Calu3 (cell line): ENCODE measurements at regions of chr3 and their contacts with region 1.

Region 1: GRCh38 chr3:110343945-110344344 is 727.7 kb upstream of the NECTIN3 start:
- DNase-seq: peak; percentile 3
- H3K4me3 Mint-ChIP-seq: peak overlapping the region; percentile 14
- H3K27ac Mint-ChIP-seq: peak overlapping the region; percentile 91
- H3K4me1 Mint-ChIP-seq: peaks cover 49% of the 10 kb centered on the region
- H3K27me3 Mint-ChIP-seq: no peaks in the 10 kb centered on the region
- CTCF ChIP-seq: no peak

Region 2: DNA sequence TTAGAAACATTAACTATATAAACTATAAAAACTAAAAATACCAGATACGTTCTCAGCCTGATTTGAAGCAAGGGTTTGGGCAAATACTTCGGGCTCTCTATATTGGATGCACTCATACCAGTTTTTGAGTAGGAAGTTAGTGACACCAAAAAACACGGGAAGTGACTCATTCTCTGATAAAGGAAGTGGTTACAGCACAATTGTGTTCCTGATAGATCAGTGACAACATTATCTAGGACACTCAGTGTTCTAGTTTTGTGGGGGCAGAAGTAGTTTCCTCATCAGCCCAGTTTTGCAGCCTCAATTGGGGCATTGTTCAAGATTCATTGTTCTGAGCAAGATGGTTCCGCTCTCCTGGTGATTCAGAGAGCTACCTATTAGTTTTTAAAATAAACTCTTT is 537.0 kb before region 1 on chr3:
- CTCF ChIA-PET with region 1: no interaction called
- intact Hi-C with region 1: loop called (anchors 5 kb)
- DNase-seq: peak; percentile 48
- H3K4me3 Mint-ChIP-seq: no peak overlapping the region
- H3K27ac Mint-ChIP-seq: peak overlapping the region; percentile 94
- H3K4me1 Mint-ChIP-seq: peaks cover 33% of the 10 kb centered on the region
- H3K27me3 Mint-ChIP-seq: no peaks in the 10 kb centered on the region
- CTCF ChIP-seq: no peak

Region 3: GRCh38 chr3:110391640-110392395 is 47.9 kb after region 1 on chr3:
- CTCF ChIA-PET with region 1: no interaction called
- intact Hi-C with region 1: no loop called
- DNase-seq: no peak
- H3K4me3 Mint-ChIP-seq: no peak overlapping the region
- H3K27ac Mint-ChIP-seq: no peak overlapping the region
- H3K4me1 Mint-ChIP-seq: no peaks in the 10 kb centered on the region
- H3K27me3 Mint-ChIP-seq: no peaks in the 10 kb centered on the region
- CTCF ChIP-seq: no peak

Region 4: DNA sequence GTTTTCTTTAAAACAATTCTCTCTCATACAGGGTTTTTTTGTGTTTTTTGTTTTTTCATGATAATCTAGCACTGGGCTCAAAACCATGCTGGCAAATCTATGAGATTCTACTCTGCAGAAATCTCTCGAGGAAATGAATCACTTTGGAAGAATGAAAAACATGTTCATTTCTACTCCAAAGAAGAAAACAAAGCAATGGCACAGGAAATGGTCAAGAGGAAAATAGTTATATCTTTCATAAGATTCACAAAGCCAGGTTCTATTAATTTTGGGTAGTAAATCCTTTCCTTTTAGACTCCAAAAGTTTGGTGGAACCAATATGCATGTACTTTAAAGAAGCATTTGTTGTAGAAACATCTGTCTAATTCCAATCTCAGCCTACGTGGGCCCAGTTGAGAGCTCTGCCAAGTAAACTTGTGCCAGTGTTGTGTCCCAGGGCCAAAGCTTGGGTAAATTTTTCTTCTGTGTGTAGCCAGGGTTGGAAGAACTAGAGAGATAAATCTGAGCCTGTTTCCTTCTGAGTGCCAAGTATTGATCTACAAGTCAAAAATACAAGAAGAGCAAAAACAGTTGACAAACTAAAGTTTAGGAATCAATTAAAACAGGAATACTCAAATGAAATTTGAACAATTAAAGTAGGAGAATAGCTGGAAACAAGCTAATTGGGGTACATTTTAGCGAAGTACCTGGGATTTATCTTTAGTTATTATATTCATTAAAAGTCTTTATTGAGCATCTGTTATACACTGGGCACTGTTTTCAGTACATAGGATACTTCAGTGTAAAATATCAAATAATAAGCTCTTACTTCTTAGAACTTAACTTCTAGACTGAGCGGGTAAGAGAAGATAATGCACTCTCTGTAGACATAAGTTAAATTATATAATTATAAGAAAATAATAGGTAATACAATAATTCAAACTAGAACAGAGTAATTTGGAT is 70.1 kb after region 1 on chr3:
- CTCF ChIA-PET with region 1: no interaction called
- intact Hi-C with region 1: loop called (anchors 2 kb)
- DNase-seq: no peak
- H3K4me3 Mint-ChIP-seq: no peak overlapping the region
- H3K27ac Mint-ChIP-seq: peak overlapping the region; percentile 89
- H3K4me1 Mint-ChIP-seq: peaks cover 34% of the 10 kb centered on the region
- H3K27me3 Mint-ChIP-seq: no peaks in the 10 kb centered on the region
- CTCF ChIP-seq: no peak

Region 5: GRCh38 chr3:110666495-110667128 is 322.7 kb after region 1 on chr3:
- CTCF ChIA-PET with region 1: no interaction called
- intact Hi-C with region 1: loop called (anchors 5 kb)
- DNase-seq: peak; percentile 51
- H3K4me3 Mint-ChIP-seq: peak overlapping the region; percentile 69
- H3K27ac Mint-ChIP-seq: peak overlapping the region; percentile 97
- H3K4me1 Mint-ChIP-seq: peaks cover 53% of the 10 kb centered on the region
- H3K27me3 Mint-ChIP-seq: no peaks in the 10 kb centered on the region
- CTCF ChIP-seq: no peak